ENCODE measurements at regions of chr22 and their contacts with region 1.

Region 1: DNA sequence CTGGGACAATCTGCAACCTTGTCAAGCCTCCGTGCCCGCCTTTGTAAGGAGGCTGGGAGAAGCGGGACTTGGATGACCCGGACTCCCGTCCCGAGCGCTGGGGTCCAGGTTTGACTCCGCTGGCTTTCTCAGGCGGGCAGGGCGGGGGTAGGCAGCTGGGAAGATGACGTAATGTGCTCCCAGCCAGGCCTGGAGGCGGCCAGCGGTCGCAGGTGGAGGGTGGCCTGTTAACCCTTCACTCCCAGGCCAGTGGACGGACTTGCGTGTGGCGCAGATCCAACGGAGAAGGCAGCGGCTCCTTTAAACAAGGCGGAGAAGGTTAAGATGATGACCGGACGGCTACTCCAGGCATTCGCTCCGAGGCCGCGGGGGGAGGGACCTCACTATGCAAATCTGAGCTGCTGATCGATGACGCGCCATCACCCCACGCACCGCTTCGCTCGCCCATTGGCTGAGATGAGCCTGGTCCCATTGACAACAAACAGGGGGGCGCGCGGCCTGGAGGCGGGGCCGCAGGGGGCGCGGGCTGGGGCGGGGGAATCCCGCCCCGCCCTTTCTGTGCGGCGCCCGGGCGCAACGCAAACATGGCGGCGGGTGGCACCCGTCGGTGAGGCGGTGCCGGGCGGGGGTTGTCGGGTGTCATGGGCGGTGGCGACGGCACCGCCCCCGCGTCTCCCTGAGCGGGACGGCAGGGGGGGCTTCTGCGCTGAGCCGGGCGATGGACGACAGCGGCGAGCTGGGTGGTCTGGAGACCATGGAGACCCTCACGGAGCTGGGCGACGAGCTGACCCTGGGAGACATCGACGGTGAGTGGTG is at the start of gene SREBF2:
- DNase-seq: peak; percentile 97 to 99 (median 98)
- H3K4me3 ChIP-seq: peak within 1 kb of the TSS; percentile 36 to 93
- H3K4me3 Mint-ChIP-seq: peak within 1 kb of the TSS; percentile 92 to 97 (median 95)
- H3K27ac ChIP-seq: peak within 1 kb of the TSS; percentile 84
- H3K27ac Mint-ChIP-seq: peak within 1 kb of the TSS; percentile 98 to 100 (median 99)
- H3K4me1 ChIP-seq: peaks cover 26% of the 10 kb centered on the region
- H3K4me1 Mint-ChIP-seq: peaks cover 21 to 46% (median 31%) of the 10 kb centered on the region in 4 donors
- H3K27me3 ChIP-seq: no peaks in the 10 kb centered on the region
- H3K27me3 Mint-ChIP-seq: no peaks in the 10 kb centered on the region
- total RNA-seq, gene SREBF2: 109 to 112 TPM

Region 2: GRCh38 chr22:41688365-41689211 is 144.2 kb before region 1 on chr22 and contains the start of gene SNU13:
- CTCF ChIA-PET with region 1: no interaction called
- POLR2A ChIA-PET with region 1: interaction called, 21 read pairs
- intact Hi-C with region 1: no loop called
- DNase-seq: peak; percentile 91 to 95 (median 92)
- H3K4me3 ChIP-seq: peak within 1 kb of the TSS; percentile 75 to 96
- H3K4me3 Mint-ChIP-seq: peak within 1 kb of the TSS; percentile 94 to 99 (median 97)
- H3K27ac ChIP-seq: peak within 1 kb of the TSS; percentile 95
- H3K27ac Mint-ChIP-seq: peak within 1 kb of the TSS; percentile 95 to 99 (median 98)
- H3K4me1 ChIP-seq: peaks cover 37% of the 10 kb centered on the region
- H3K4me1 Mint-ChIP-seq: peaks cover 21 to 48% (median 33%) of the 10 kb centered on the region in 4 donors
- H3K27me3 ChIP-seq: no peaks in the 10 kb centered on the region
- H3K27me3 Mint-ChIP-seq: no peaks in the 10 kb centered on the region
- total RNA-seq, gene SNU13: 123 to 129 TPM

Region 3: DNA sequence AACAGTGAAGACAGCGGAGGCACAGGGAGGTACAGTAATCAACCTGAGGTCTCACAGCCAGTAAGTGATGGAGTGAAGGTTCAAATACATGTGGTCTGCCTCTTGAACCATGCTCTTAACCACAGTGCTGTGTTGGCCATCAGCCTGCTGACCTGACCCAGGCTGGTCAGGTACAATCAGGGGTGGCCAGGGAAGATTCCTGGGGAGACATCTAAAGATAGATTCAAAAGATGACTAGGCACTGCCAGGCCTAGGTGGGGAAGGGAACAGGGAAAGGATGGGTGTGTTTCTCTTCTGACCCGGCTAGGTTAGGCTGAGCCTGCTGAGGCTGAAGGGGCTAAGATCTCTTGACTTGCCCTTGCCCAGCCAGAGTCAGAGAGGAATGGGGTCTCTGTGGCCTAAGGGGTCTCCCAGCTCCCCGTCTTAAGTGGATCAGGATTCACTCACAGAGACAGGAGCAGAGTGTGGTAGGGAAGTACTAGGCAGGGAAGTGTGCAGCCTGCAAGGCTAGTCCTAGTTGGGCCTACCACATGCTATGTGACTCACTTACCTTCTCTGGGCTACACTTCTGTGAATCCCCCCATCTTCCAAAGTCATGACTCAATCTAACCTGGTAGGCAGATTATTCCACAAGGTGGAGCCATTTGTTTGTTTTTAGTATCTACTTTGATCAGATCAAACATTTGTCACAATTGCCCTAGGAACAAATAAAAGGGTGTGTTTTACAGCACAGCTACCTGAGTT is 10.3 kb before region 1 on chr22:
- CTCF ChIA-PET with region 1: interaction called, 9 read pairs
- POLR2A ChIA-PET with region 1: interaction called, 18 read pairs
- intact Hi-C with region 1: no loop called
- DNase-seq: peak; percentile 69 to 81 (median 72)
- H3K4me3 ChIP-seq: no peak overlapping the region
- H3K4me3 Mint-ChIP-seq: no peak overlapping the region
- H3K27ac ChIP-seq: peak overlapping the region; percentile 19
- H3K27ac Mint-ChIP-seq: peak overlapping the region; percentile 47 to 92 (median 76)
- H3K4me1 ChIP-seq: peaks cover 5% of the 10 kb centered on the region
- H3K4me1 Mint-ChIP-seq: peaks cover 5 to 14% (median 10%) of the 10 kb centered on the region in 4 donors
- H3K27me3 ChIP-seq: no peaks in the 10 kb centered on the region
- H3K27me3 Mint-ChIP-seq: no peaks in the 10 kb centered on the region

Region 4: GRCh38 chr22:41919357-41920224 is 86.8 kb after region 1 on chr22:
- CTCF ChIA-PET with region 1: no interaction called
- POLR2A ChIA-PET with region 1: interaction called, 4 read pairs
- intact Hi-C with region 1: loop called (anchors 1 kb)
- DNase-seq: peak in 3 of 5 donors; percentile 29 to 50 (median 36)
- H3K4me3 ChIP-seq: peak overlapping the region; percentile 22 to 34
- H3K4me3 Mint-ChIP-seq: peak overlapping the region; percentile 67 to 83 (median 72)
- H3K27ac ChIP-seq: peak overlapping the region; percentile 29
- H3K27ac Mint-ChIP-seq: peak overlapping the region in 3 of 7 donors; percentile 29 to 53 (median 31)
- H3K4me1 ChIP-seq: peaks cover 28% of the 10 kb centered on the region
- H3K4me1 Mint-ChIP-seq: peaks cover 5 to 25% (median 17%) of the 10 kb centered on the region in 4 donors
- H3K27me3 ChIP-seq: no peaks in the 10 kb centered on the region
- H3K27me3 Mint-ChIP-seq: peaks cover 2 to 8% of the 10 kb centered on the region in 2 donors

Region 5: GRCh38 chr22:41925655-41926460 is 93.1 kb after region 1 on chr22:
- CTCF ChIA-PET with region 1: interaction called, 4 read pairs
- POLR2A ChIA-PET with region 1: interaction called, 28 read pairs
- intact Hi-C with region 1: no loop called
- DNase-seq: peak; percentile 73 to 82 (median 77)
- H3K4me3 ChIP-seq: peak overlapping the region in 1 of 2 donors; percentile 43
- H3K4me3 Mint-ChIP-seq: peak overlapping the region; percentile 73 to 87 (median 82)
- H3K27ac ChIP-seq: no peak overlapping the region
- H3K27ac Mint-ChIP-seq: peak overlapping the region; percentile 57 to 83 (median 71)
- H3K4me1 ChIP-seq: peaks cover 15% of the 10 kb centered on the region
- H3K4me1 Mint-ChIP-seq: peaks cover 3 to 25% (median 9%) of the 10 kb centered on the region in 4 donors
- H3K27me3 ChIP-seq: no peaks in the 10 kb centered on the region
- H3K27me3 Mint-ChIP-seq: no peaks in the 10 kb centered on the region

Region 6: GRCh38 chr22:42007922-42008321 is 175.2 kb after region 1 on chr22:
- CTCF ChIA-PET with region 1: no interaction called
- POLR2A ChIA-PET with region 1: no interaction called
- intact Hi-C with region 1: no loop called
- DNase-seq: no peak
- H3K4me3 ChIP-seq: no peak overlapping the region
- H3K4me3 Mint-ChIP-seq: no peak overlapping the region
- H3K27ac ChIP-seq: no peak overlapping the region
- H3K27ac Mint-ChIP-seq: no peak overlapping the region
- H3K4me1 ChIP-seq: no peaks in the 10 kb centered on the region
- H3K4me1 Mint-ChIP-seq: no peaks in the 10 kb centered on the region
- H3K27me3 ChIP-seq: no peaks in the 10 kb centered on the region
- H3K27me3 Mint-ChIP-seq: peaks cover 3 to 6% of the 10 kb centered on the region in 2 donors